Astrocyte of the cerebellum (primary cell): ENCODE measurements at regions of chr3 and their contacts with region 1.

Region 1: GRCh38 chr3:153595186-153595815 is 433.3 kb downstream of the RAP2B start:
- DNase-seq: peak; percentile 60
- H3K4me3 ChIP-seq: no peak overlapping the region
- CTCF ChIP-seq: peak; percentile 84

Region 2: GRCh38 chr3:153026026-153026425 is 569.3 kb before region 1 on chr3:
- in situ Hi-C with region 1: loop called (anchors 10 kb)
- DNase-seq: peak; percentile 34
- H3K4me3 ChIP-seq: no peak overlapping the region
- CTCF ChIP-seq: no peak

Region 3: DNA sequence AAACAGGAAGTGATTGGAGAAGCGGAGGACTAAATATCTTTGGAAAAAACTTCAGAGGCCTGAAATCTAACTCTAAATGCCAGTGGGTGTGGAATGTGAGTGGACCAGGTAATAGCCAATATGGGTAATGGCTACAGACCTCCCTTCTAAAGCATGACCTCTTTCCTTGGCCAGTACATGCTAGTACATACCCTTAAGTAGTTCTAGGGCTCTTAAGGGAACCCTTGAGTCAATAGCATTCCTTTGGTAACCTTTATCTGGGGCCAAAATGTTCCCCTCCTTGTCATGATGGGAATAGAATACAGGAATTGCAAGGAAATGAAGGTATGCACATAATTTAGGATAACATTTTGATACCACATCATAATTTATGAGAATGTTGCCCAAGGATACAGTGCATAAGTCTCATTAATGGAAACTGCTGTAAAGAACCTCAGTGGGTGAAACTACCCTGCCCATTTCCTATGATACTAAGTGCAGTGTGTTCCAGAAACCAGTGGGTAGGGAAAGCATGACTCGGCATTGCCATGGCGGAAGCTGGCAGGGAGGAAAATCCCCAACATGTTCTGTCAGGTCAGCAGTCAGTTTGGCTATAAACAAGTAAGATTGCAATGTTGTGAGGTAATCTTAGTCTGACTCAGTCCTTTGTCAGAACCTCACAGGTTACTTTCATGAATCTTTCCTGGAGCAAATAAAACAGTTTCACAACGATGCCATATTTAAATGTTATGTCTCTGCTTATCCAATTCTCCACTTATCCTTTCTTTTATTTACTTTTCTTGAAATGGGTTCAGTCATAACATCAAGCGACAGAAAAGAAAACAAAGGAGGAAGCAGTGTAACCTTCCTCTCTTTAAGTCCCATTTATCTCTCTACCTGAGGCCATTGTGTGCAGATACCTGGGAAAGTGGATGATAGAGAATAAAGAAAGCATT is 456.8 kb before region 1 on chr3:
- in situ Hi-C with region 1: no loop called
- DNase-seq: peak; percentile 73
- H3K4me3 ChIP-seq: no peak overlapping the region
- CTCF ChIP-seq: no peak

Region 4: GRCh38 chr3:153161138-153161713 is 434.1 kb before region 1 on chr3:
- in situ Hi-C with region 1: loop called (anchors 10 kb)
- DNase-seq: peak; percentile 100
- H3K4me3 ChIP-seq: peak overlapping the region; percentile 92
- CTCF ChIP-seq: no peak